Tibial artery (tissue), 4 donors: ENCODE measurements at regions of chr7 and their contacts with region 1.

Region 1: DNA sequence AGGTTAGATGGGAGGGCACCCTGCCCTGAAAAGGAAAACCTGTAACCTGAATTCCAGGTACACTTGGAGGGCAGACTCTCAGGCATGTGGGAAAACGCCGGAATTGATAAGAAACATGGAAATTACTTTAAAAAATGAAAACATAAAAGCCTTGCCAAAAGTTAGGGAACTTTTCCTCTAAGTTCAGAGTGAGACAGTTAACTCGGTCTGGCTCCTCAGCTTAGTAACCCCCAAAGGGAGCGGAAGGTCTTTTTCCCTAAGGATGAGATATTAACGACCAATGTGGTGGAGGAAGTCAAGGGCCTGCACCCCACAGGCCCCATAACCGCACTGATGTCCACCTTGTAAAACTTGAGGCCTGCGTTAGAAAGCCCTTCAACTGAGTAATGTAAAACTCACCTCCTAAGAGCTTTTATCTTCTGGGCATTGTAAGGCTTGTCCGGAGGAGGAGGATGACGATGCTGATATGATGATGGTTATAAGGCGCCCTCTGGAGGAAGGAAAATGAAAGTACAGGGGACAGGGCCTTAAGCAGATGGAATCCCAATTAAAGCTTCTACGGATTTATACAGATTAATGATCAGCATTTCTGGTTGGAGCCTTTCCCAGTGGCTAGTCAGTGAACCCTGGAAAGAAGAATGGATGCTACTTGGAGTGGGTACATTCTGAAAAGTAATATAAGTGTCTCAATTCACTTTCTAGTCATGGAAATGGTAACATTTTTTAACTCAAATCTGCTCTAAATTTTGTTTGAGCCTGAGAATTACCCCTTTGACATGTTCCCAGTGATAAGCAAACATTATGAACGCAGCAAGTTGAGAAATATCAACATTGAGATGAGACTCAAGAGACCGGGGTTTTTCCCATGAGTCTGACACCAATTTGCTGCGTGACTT is 694 bp downstream of the COL1A2 start:
- DNase-seq: peak; percentile 79
- H3K4me3 ChIP-seq: peak overlapping the region; percentile 68 to 76
- H3K27ac ChIP-seq: peak overlapping the region; percentile 89 to 93
- H3K4me1 ChIP-seq: peaks cover 0 to 60% (median 36%) of the 10 kb centered on the region in 4 donors
- H3K27me3 ChIP-seq: no peaks in the 10 kb centered on the region
- CTCF ChIP-seq: peak; percentile 87 to 92

Region 2: GRCh38 chr7:94295850-94296249 is 99.5 kb before region 1 on chr7:
- intact Hi-C with region 1: loop called (anchors 2 kb)
- DNase-seq: no peak
- H3K4me3 ChIP-seq: peak overlapping the region; percentile 26 to 35
- H3K27ac ChIP-seq: peak overlapping the region; percentile 79 to 86
- H3K4me1 ChIP-seq: peaks cover 0 to 52% (median 27%) of the 10 kb centered on the region in 4 donors
- H3K27me3 ChIP-seq: no peaks in the 10 kb centered on the region
- CTCF ChIP-seq: peak; percentile 64 to 85

Region 3: GRCh38 chr7:94374231-94374630 is 21.2 kb before region 1 on chr7:
- intact Hi-C with region 1: loop called (anchors 2 kb)
- DNase-seq: peak; percentile 84 to 93
- H3K4me3 ChIP-seq: peak overlapping the region; percentile 20 to 27
- H3K27ac ChIP-seq: peak overlapping the region; percentile 78 to 84
- H3K4me1 ChIP-seq: peaks cover 0 to 49% (median 27%) of the 10 kb centered on the region in 4 donors
- H3K27me3 ChIP-seq: no peaks in the 10 kb centered on the region
- CTCF ChIP-seq: no peak

Region 4: GRCh38 chr7:94436018-94436604 is 40.7 kb after region 1 on chr7:
- intact Hi-C with region 1: no loop called
- DNase-seq: peak; percentile 80
- H3K4me3 ChIP-seq: no peak overlapping the region
- H3K27ac ChIP-seq: no peak overlapping the region
- H3K4me1 ChIP-seq: no peaks in the 10 kb centered on the region
- H3K27me3 ChIP-seq: no peaks in the 10 kb centered on the region
- CTCF ChIP-seq: peak; percentile 82